ENCODE measurements at regions of chr19 and their contacts with region 1.

Region 1: GRCh38 chr19:17215125-17215971 is at the start of gene USE1:
- DNase-seq: peak; percentile 93
- ATAC-seq: peak; percentile 96
- H3K4me3 Mint-ChIP-seq: peak within 1 kb of the TSS; percentile 82
- H3K27ac Mint-ChIP-seq: peak within 1 kb of the TSS; percentile 98
- H3K4me1 Mint-ChIP-seq: peaks cover 27% of the 10 kb centered on the region
- H3K27me3 Mint-ChIP-seq: no peaks in the 10 kb centered on the region
- total RNA-seq, gene USE1: 26.5 to 27.9 TPM

Region 2: DNA sequence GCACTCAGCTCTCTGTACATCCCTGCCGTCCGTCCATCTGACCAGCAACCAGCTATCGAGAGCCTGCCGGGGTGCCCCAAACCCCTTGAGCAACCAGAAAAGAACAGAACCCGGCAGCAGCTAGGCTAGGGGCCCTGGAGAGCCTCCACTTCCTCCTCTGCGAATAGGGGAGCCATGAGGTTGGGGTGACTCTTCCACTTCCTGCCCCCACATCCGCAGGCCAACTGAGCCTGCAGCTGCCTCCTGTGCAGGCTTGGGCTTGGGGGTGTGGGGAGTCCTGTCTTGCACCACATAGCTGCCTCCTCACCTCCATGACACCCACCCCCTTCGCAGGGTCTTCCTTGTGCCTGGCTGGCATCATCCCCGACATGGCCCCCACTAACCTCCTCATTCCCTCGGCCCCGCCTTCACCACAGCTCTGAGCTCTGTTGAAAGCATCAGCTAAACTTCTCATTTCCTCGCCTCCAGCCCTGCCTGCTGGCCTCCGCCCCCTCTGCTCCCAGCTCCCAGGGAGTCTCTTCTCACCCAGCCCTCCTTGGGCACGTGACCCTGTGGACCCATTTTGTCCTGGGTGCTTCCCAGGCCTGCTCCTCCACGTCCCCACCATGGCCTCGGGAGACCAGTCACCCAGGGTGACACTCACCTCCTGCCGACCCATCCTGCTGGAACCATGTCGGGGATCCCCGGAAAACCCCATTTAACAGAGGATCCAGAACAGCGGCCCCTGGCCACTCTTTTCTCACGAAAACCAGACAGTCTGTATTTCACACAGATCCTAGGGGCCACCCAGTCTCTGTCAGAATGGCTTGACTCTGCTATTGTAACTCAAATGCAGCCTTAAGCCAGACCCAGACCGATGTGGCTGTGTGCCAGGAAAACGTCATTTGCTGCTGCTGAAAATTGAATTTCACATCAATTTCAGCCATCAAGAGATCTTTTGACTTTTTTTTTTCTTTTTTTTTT is 89.4 kb before region 1 on chr19:
- CTCF ChIA-PET with region 1: no interaction called
- POLR2A ChIA-PET with region 1: interaction called, 10 read pairs
- DNase-seq: peak; percentile 92
- ATAC-seq: peak; percentile 95
- H3K4me3 Mint-ChIP-seq: peak overlapping the region; percentile 83
- H3K27ac Mint-ChIP-seq: peak overlapping the region; percentile 100
- H3K4me1 Mint-ChIP-seq: peaks cover 81% of the 10 kb centered on the region
- H3K27me3 Mint-ChIP-seq: no peaks in the 10 kb centered on the region

Region 3: GRCh38 chr19:17226002-17226933 is 10.9 kb after region 1 on chr19 and contains the start of gene OCEL1:
- CTCF ChIA-PET with region 1: interaction called, 7 read pairs
- POLR2A ChIA-PET with region 1: interaction called, 35 read pairs
- DNase-seq: peak; percentile 98
- ATAC-seq: peak; percentile 95
- H3K4me3 Mint-ChIP-seq: peak within 1 kb of the TSS; percentile 82
- H3K27ac Mint-ChIP-seq: peak within 1 kb of the TSS; percentile 96
- H3K4me1 Mint-ChIP-seq: peaks cover 8% of the 10 kb centered on the region
- H3K27me3 Mint-ChIP-seq: no peaks in the 10 kb centered on the region
- total RNA-seq, gene OCEL1: 24.3 to 28.3 TPM

Region 4: GRCh38 chr19:17235618-17236377 is 20.4 kb after region 1 on chr19:
- CTCF ChIA-PET with region 1: no interaction called
- POLR2A ChIA-PET with region 1: interaction called, 14 read pairs
- DNase-seq: peak; percentile 82
- ATAC-seq: peak; percentile 96
- H3K4me3 Mint-ChIP-seq: peak overlapping the region; percentile 81
- H3K27ac Mint-ChIP-seq: no peak overlapping the region
- H3K4me1 Mint-ChIP-seq: peaks cover 12% of the 10 kb centered on the region
- H3K27me3 Mint-ChIP-seq: no peaks in the 10 kb centered on the region

Region 5: GRCh38 chr19:17479325-17479791 is 264.0 kb after region 1 on chr19:
- CTCF ChIA-PET with region 1: no interaction called
- POLR2A ChIA-PET with region 1: no interaction called
- DNase-seq: no peak
- ATAC-seq: no peak
- H3K4me3 Mint-ChIP-seq: no peak overlapping the region
- H3K27ac Mint-ChIP-seq: no peak overlapping the region
- H3K4me1 Mint-ChIP-seq: no peaks in the 10 kb centered on the region
- H3K27me3 Mint-ChIP-seq: no peaks in the 10 kb centered on the region